Aorta (tissue), 5 donors: ENCODE measurements at regions of chr14 and their contacts with region 1.

Region 1: DNA sequence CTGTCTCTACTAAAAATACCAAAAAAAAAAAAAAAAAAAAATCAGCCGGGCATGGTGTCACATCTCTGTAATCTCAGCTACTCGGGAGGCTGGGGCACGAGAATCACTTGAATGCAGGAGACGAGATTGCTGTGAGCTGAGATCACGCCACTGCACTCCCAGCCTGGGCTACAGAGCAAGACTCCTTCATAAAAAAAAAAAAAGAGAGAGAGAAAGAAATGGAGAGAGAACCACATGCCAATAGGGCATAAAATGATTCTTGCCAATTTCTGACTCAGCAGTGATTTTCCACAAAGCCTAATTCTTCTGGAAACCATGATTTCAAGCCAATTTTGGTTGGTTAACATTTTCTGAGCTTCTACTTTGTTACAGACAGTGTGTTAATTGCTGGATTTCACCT is 250.4 kb upstream of the SEL1L start:
- DNase-seq: peak; percentile 75 to 78
- ATAC-seq: no peak
- H3K4me3 ChIP-seq: no peak overlapping the region
- H3K27ac ChIP-seq: no peak overlapping the region
- H3K4me1 ChIP-seq: peaks cover 0 to 3% of the 10 kb centered on the region in 2 donors
- H3K27me3 ChIP-seq: no peaks in the 10 kb centered on the region

Region 2: DNA sequence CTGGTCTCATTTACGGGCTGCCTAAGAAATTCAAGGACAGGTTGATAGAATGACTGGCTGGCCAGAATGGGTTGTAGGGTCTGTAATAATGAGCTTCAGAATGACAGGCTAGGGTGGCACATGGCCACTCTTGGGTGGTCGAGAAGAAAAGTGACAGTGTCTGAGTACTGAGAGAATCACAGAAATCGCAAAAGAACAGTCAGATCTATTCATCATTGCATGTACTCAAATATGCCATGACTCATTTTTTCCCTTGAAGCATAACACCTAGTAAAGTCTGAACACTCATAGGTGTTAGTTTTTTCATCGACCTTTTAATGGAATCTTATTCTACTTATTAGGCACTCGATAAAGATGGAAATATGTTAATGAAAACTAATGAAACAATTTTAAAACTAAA is 212.6 kb before region 1 on chr14:
- intact Hi-C with region 1: loop called in 1 of 2 experiments (anchors 10 kb)
- DNase-seq: no peak
- ATAC-seq: no peak
- H3K4me3 ChIP-seq: no peak overlapping the region
- H3K27ac ChIP-seq: no peak overlapping the region
- H3K4me1 ChIP-seq: peaks cover 8 to 9% of the 10 kb centered on the region in 2 donors
- H3K27me3 ChIP-seq: no peaks in the 10 kb centered on the region

Region 3: GRCh38 chr14:81709681-81710080 is 74.4 kb before region 1 on chr14:
- intact Hi-C with region 1: no loop called
- DNase-seq: no peak
- ATAC-seq: no peak
- H3K4me3 ChIP-seq: no peak overlapping the region
- H3K27ac ChIP-seq: no peak overlapping the region
- H3K4me1 ChIP-seq: no peaks in the 10 kb centered on the region
- H3K27me3 ChIP-seq: no peaks in the 10 kb centered on the region